ENCODE measurements at regions of chr1 and their contacts with region 1.

Region 1: DNA sequence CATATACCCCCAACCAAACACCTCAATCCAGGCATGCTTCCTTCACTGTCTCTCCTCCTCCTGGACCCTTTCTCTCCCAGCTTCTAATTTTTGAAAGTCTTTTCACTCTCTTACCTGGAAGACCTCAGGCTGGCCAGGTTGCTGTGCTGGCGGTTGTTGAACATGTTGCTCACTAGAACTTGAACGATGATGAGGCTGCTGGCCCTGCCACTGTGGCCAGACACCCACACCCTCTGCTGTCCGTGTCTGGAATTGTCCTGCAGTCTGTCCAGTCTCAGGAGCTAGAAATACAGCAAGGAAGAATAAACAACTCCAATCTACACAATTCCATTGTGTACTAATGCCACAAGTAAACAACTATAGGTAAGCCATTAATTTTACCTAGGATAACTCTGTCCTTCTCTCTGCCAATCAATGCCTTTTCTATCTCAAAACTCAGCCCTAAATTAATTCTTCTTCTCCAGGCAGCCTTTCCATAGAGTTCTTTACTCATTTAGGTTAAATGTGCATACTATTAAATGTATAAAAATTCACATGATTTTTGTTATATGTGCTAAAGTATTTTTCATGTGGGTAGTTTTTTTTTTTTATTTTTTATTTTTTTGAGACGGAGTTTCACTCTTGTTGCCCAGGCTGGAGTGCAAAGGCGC is 5.1 kb upstream of the CTSK start:
- DNase-seq: no peak
- H3K4me3 ChIP-seq: no peak overlapping the region
- H3K27me3 ChIP-seq: no peaks in the 10 kb centered on the region
- CTCF ChIP-seq: peak; percentile 85

Region 2: GRCh38 chr1:150826299-150826698 is 13.1 kb after region 1 on chr1:
- CTCF ChIA-PET with region 1: interaction called, 19 read pairs
- POLR2A ChIA-PET with region 1: interaction called, 18 read pairs
- DNase-seq: no peak
- H3K4me3 ChIP-seq: no peak overlapping the region
- H3K27me3 ChIP-seq: no peaks in the 10 kb centered on the region
- CTCF ChIP-seq: no peak

Region 3: DNA sequence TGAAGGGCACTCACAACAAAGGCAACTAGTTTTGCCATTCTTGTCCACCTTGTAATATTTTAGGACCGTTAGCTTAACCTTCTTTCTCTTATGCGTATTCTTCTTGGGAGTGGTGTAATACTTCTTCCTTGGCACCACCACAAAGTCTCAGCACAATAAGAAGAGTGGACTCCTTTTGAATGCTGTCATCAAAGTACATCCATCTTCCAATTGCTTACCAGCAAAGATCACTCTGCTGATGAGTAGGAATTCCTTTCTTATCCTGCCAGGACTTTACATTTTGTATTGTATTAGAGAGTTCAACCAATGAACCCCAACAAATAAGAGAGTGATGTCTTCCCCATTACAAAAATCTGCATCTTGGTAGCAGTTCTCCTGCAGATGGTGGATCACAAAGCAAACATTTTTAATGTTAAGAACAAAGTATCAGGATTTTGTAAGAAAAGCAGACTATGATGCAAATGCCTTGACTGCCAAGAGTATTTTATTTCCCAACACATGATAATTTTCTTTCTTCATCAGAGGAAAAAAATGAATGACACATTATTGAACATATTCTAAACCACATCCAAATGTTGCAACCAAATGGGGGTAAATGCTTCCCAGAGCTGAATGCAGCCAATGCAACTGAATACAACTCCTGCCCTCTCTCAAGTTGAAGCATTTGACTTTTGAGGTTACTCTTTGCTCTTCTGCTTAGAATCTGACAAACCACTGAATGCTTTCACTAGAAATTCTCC is 68.3 kb after region 1 on chr1:
- CTCF ChIA-PET with region 1: no interaction called
- POLR2A ChIA-PET with region 1: no interaction called
- DNase-seq: peak; percentile 94
- H3K4me3 ChIP-seq: no peak overlapping the region
- H3K27me3 ChIP-seq: no peaks in the 10 kb centered on the region
- CTCF ChIP-seq: no peak

Region 4: DNA sequence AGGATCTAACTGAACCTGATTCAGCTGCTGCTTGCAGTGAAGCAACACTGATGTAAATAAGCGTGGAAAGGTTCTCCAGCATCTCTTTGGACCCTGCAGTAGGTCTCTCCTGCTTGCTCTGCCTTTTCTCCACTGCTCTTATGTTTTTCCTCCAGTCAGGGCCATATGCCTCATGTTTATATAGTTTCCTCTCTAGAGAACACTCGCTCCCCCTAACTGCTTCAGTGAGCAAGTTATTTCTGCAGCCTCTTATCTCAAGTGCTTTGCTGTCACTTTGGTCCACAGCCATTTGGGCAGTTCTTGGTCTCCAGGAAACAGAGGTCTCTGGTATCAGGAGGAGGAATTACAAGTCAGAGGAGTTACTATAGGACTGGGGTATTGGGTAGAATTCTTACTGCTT is 200.3 kb after region 1 on chr1:
- CTCF ChIA-PET with region 1: no interaction called
- POLR2A ChIA-PET with region 1: no interaction called
- DNase-seq: no peak
- H3K4me3 ChIP-seq: no peak overlapping the region
- H3K27me3 ChIP-seq: no peaks in the 10 kb centered on the region
- CTCF ChIP-seq: no peak